BJ (cell line): ENCODE measurements at regions of chr2 and their contacts with region 1.

Region 1: GRCh38 chr2:169109502-169110409 is 40.4 kb downstream of the DHRS9 start:
- DNase-seq: no peak
- H3K4me3 ChIP-seq: no peak overlapping the region
- H3K27me3 ChIP-seq: no peaks in the 10 kb centered on the region
- CTCF ChIP-seq: peak; percentile 87

Region 2: DNA sequence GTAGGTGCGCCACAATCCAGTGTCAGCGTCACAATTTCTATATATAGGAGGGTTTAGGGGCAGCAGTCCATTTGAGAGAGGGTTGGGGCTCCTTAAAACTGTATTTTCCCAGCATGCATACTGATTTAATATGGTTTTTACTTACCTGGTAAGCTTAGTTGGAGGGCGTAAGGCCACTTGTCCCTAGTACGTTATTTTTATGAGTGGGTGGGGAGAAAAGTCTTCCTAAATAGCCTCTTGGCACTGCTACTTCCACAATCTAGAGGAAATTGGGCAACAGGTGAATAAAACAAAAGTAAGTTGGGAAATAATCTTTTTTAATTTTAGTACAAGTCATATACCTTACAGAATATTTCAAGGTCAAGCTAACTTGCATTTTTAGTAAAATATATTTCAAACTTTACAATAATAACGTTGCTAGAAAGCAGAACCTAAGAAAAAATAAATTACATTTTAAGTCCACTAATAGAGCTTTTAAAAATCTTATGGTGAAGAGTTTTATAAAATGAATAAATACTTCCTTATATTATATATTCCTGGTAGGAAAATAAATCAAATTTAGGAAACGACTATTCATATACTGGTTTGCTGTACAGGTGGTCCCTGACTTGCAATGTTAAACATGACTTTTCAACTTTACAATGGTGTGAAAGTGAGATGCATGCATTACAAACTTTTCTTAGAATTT is 19.5 kb before region 1 on chr2:
- CTCF ChIA-PET with region 1: interaction called, 43 read pairs
- POLR2A ChIA-PET with region 1: no interaction called
- DNase-seq: no peak
- H3K4me3 ChIP-seq: no peak overlapping the region
- H3K27me3 ChIP-seq: no peaks in the 10 kb centered on the region
- CTCF ChIP-seq: no peak

Region 3: DNA sequence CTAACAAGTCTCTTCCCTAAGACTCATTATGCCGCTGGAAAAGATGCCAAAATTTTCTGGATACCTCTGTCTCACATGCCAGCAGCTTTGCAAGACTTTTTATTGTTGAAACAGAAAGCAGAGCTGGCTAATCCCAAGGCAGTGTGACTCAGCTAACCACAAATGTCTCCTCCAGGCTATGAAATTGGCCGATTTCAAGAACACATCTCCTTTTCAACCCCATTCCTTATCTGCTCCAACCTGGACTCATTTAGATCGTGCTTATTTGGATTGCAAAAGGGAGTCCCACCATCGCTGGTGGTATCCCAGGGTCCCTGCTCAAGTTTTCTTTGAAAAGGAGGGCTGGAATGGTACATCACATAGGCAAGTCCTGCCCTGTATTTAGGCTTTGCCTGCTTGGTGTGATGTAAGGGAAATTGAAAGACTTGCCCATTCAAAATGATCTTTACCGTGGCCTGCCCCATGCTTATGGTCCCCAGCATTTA is 14.1 kb before region 1 on chr2:
- CTCF ChIA-PET with region 1: interaction called, 43 read pairs
- POLR2A ChIA-PET with region 1: no interaction called
- DNase-seq: peak; percentile 64
- H3K4me3 ChIP-seq: no peak overlapping the region
- H3K27me3 ChIP-seq: 0 out of 2 replicates have a peak, but pooled peaks cover 1% of the 10 kb centered on the region
- CTCF ChIP-seq: no peak

Region 4: GRCh38 chr2:169131587-169132512 is 22.1 kb after region 1 on chr2:
- CTCF ChIA-PET with region 1: interaction called, 16 read pairs
- POLR2A ChIA-PET with region 1: no interaction called
- DNase-seq: no peak
- H3K4me3 ChIP-seq: no peak overlapping the region
- H3K27me3 ChIP-seq: no peaks in the 10 kb centered on the region
- CTCF ChIP-seq: peak; percentile 66

Region 5: GRCh38 chr2:169141713-169142352 is 32.1 kb after region 1 on chr2:
- CTCF ChIA-PET with region 1: interaction called, 32 read pairs
- POLR2A ChIA-PET with region 1: no interaction called
- DNase-seq: no peak
- H3K4me3 ChIP-seq: no peak overlapping the region
- H3K27me3 ChIP-seq: no peaks in the 10 kb centered on the region
- CTCF ChIP-seq: peak; percentile 89